K562 (cell line): ENCODE measurements at regions of chr2 and their contacts with region 1.

Region 1: GRCh38 chr2:143259368-143259958 is 130.2 kb downstream of the ARHGAP15 start:
- DNase-seq: peak; percentile 15 to 73 (median 22)
- ATAC-seq: peak; percentile 87
- H3K4me3 ChIP-seq: no peak overlapping the region
- H3K27ac ChIP-seq: no peak overlapping the region
- H3K4me1 ChIP-seq: no peaks in the 10 kb centered on the region; a peak in 1 of 5 replicates
- H3K27me3 ChIP-seq: no peaks in the 10 kb centered on the region
- CTCF ChIP-seq: peak; percentile 56 to 72 (median 70); a peak in 5 of 6 replicates
- EP300 ChIP-seq: no peak
- POLR2A ChIP-seq: no peak
- RAD21 ChIP-seq: peak; percentile 55 to 70

Region 2: GRCh38 chr2:143034292-143035074 is 225.0 kb before region 1 on chr2:
- CTCF ChIA-PET with region 1: no interaction called
- POLR2A ChIA-PET with region 1: no interaction called
- in situ Hi-C with region 1: no loop called
- intact Hi-C with region 1: loop called (anchors 1 kb)
- DNase-seq: peak; percentile 57 to 81 (median 71)
- ATAC-seq: peak; percentile 85
- H3K4me3 ChIP-seq: no peak overlapping the region
- H3K27ac ChIP-seq: no peak overlapping the region
- H3K4me1 ChIP-seq: no peaks in the 10 kb centered on the region
- H3K27me3 ChIP-seq: no peaks in the 10 kb centered on the region
- CTCF ChIP-seq: peak; percentile 90 to 98 (median 94)
- EP300 ChIP-seq: no peak
- POLR2A ChIP-seq: no peak
- RAD21 ChIP-seq: peak; percentile 75 to 77

Region 3: DNA sequence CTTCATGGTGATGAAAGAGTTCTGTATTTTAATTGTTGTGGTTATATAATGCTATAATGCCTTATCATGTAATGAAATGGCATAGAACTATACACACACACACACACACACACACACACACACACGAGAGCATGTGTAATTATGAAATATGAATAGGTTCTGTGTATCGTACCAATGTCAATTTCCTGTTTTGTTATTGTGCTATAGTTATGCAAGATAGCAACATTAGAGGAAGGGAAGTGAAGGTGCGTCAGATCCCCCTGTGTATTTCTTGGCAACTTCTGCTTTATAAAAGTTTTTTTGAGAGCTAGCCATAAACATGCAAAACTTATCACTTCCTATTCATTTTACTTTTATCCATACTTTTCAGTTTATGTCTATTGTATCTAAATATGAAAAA is 191.0 kb before region 1 on chr2:
- CTCF ChIA-PET with region 1: no interaction called
- POLR2A ChIA-PET with region 1: no interaction called
- in situ Hi-C with region 1: no loop called
- intact Hi-C with region 1: no loop called
- DNase-seq: no peak
- ATAC-seq: no peak
- H3K4me3 ChIP-seq: no peak overlapping the region
- H3K27ac ChIP-seq: no peak overlapping the region
- H3K4me1 ChIP-seq: no peaks in the 10 kb centered on the region
- H3K27me3 ChIP-seq: no peaks in the 10 kb centered on the region
- CTCF ChIP-seq: no peak
- EP300 ChIP-seq: no peak
- POLR2A ChIP-seq: no peak
- RAD21 ChIP-seq: no peak

Region 4: GRCh38 chr2:143110758-143111428 is 148.6 kb before region 1 on chr2:
- CTCF ChIA-PET with region 1: interaction called, 6 read pairs
- POLR2A ChIA-PET with region 1: no interaction called
- in situ Hi-C with region 1: loop called (anchors 5 kb)
- intact Hi-C with region 1: loop called (anchors 1 kb)
- DNase-seq: peak; percentile 37 to 80 (median 42)
- ATAC-seq: peak; percentile 85
- H3K4me3 ChIP-seq: no peak overlapping the region
- H3K27ac ChIP-seq: no peak overlapping the region
- H3K4me1 ChIP-seq: no peaks in the 10 kb centered on the region
- H3K27me3 ChIP-seq: no peaks in the 10 kb centered on the region
- CTCF ChIP-seq: peak; percentile 62 to 71 (median 65)
- EP300 ChIP-seq: no peak
- POLR2A ChIP-seq: no peak
- RAD21 ChIP-seq: peak; percentile 69 to 71

Region 5: DNA sequence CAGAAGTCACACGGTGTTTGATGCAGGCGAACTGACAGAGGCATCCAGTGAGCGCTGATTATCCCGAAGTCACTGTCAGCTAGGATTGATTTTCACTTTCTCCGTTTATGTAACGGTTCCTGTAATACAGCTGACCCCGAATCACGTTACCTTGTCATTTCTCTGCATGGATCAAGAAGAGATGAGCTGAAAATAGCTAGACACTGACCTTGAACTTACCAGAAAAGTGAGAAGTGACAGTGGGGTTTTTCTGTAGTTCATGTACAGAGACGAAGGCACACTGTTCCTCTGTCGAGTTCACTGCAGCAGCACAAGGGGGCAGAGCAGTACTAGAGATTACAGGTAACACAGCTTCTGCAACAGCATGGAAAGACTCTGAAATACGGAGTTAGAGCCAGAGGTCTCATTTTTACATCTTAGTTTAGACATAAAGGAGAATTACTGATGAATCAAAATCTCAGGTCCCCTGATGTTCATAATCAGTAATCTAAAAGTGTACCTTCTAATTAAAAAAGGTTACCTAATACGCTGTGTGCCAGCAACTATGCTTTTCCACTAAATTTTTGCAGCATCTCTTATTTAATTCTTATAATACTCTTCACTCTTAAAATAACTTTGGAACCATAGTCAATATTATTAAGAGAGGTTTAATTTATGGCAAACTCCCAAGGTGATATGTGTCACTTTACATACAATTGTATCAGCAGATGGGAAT is 97.2 kb before region 1 on chr2:
- CTCF ChIA-PET with region 1: no interaction called
- POLR2A ChIA-PET with region 1: no interaction called
- in situ Hi-C with region 1: no loop called
- intact Hi-C with region 1: loop called (anchors 1 kb)
- DNase-seq: peak in 2 of 4 experiments; percentile 13 to 61
- ATAC-seq: peak; percentile 93
- H3K4me3 ChIP-seq: no peak overlapping the region
- H3K27ac ChIP-seq: no peak overlapping the region
- H3K4me1 ChIP-seq: no peaks in the 10 kb centered on the region
- H3K27me3 ChIP-seq: no peaks in the 10 kb centered on the region
- CTCF ChIP-seq: peak; percentile 38 to 49 (median 48); a peak in 5 of 6 replicates
- EP300 ChIP-seq: no peak
- POLR2A ChIP-seq: no peak
- RAD21 ChIP-seq: peak; percentile 52 to 67

Region 6: GRCh38 chr2:143230506-143231253 is 28.8 kb before region 1 on chr2:
- CTCF ChIA-PET with region 1: no interaction called
- POLR2A ChIA-PET with region 1: no interaction called
- in situ Hi-C with region 1: no loop called
- intact Hi-C with region 1: no loop called
- DNase-seq: no peak
- ATAC-seq: no peak
- H3K4me3 ChIP-seq: no peak overlapping the region
- H3K27ac ChIP-seq: no peak overlapping the region
- H3K4me1 ChIP-seq: no peaks in the 10 kb centered on the region
- H3K27me3 ChIP-seq: no peaks in the 10 kb centered on the region
- CTCF ChIP-seq: no peak
- EP300 ChIP-seq: no peak
- POLR2A ChIP-seq: no peak
- RAD21 ChIP-seq: no peak